ENCODE measurements at regions of chr11 and their contacts with region 1.

Region 1: DNA sequence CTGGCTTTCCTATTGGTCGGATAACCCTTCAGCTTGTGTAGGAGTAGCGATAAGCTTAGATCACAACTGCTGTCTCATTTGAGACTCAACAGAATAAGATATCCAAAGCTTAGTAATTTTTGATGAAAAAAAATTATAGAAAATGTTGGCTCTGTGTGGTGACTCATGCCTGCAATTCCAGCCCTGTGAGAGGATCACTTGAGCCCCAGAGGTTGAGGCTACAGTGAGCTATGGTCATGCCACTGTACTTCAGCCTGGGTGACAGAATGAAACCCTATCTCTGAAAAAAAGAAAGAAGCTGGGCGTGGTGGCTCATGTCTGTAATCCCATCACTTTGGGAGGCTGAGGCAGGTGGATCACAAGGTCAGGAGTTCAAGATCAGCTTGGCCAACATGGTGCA is 55.6 kb upstream of the RRM1 start:
- DNase-seq: no peak
- H3K4me3 Mint-ChIP-seq: no peak overlapping the region
- H3K27ac Mint-ChIP-seq: no peak overlapping the region
- H3K4me1 Mint-ChIP-seq: peaks cover 11% of the 10 kb centered on the region
- H3K27me3 Mint-ChIP-seq: no peaks in the 10 kb centered on the region

Region 2: DNA sequence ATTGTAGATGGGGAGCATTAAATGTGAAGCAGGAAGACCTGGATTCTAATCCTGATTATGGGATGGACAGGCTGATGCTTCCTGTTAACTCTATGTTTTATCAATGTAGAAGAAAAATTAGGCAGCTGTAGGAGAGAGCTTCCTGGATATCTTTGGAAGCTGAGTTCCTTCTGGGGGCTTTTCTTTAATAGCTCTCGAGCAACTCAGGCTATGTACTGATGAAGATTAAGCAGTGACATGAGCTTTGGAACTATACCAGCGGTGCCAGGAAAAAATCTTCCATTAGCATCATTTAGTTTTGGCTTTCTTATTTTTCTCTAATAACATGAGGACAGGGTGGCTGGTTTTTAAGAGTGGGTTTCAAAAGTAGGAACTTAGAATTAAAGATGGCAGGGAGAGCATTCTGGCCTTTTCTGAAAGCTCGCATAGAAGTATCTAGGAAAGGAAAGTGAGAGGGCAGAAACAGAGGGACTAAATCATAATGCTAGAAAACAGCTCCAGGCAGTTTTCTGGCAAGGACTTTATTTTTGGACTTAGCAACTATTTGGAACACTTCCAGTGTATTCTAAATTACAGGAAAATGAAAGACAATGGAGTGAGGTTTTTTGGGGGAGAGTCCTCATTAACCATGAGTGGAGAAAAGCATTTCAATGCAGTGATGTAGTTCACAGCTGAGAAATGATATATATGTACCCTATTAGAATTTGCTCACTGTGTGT is 13.6 kb before region 1 on chr11:
- CTCF ChIA-PET with region 1: interaction called, 14 read pairs
- POLR2A ChIA-PET with region 1: no interaction called
- DNase-seq: no peak
- H3K4me3 Mint-ChIP-seq: no peak overlapping the region
- H3K27ac Mint-ChIP-seq: no peak overlapping the region
- H3K4me1 Mint-ChIP-seq: peaks cover 9% of the 10 kb centered on the region
- H3K27me3 Mint-ChIP-seq: no peaks in the 10 kb centered on the region

Region 3: GRCh38 chr11:4084406-4085125 is 45.6 kb after region 1 on chr11:
- CTCF ChIA-PET with region 1: no interaction called
- POLR2A ChIA-PET with region 1: no interaction called
- DNase-seq: no peak
- H3K4me3 Mint-ChIP-seq: no peak overlapping the region
- H3K27ac Mint-ChIP-seq: no peak overlapping the region
- H3K4me1 Mint-ChIP-seq: peaks cover 37% of the 10 kb centered on the region
- H3K27me3 Mint-ChIP-seq: no peaks in the 10 kb centered on the region

Measured in activated CD4-positive, alpha-beta T cell treated with anti-CD3 and anti-CD28 coated beads, Interleukin-2, amount 10 ng/mL, durations not matched to agents 7 days and 5 days (primary cell).